CD8-positive, alpha-beta T cell (primary cell): ENCODE measurements at regions of chr12 and their contacts with region 1.

Region 1: GRCh38 chr12:40312982-40313576 is 88.3 kb downstream of the LRRK2 start:
- DNase-seq: no peak
- ATAC-seq: no peak
- H3K4me3 ChIP-seq: no peak overlapping the region
- H3K4me3 Mint-ChIP-seq: no peak overlapping the region
- H3K27ac ChIP-seq: no peak overlapping the region
- H3K27ac Mint-ChIP-seq: no peak overlapping the region
- H3K4me1 ChIP-seq: no peaks in the 10 kb centered on the region
- H3K4me1 Mint-ChIP-seq: no peaks in the 10 kb centered on the region
- H3K27me3 ChIP-seq: no peaks in the 10 kb centered on the region
- H3K27me3 Mint-ChIP-seq: no peaks in the 10 kb centered on the region
- CTCF ChIP-seq: no peak

Region 2: GRCh38 chr12:40342010-40342409 is 28.9 kb after region 1 on chr12:
- CTCF ChIA-PET with region 1: no interaction called
- POLR2A ChIA-PET with region 1: no interaction called
- intact Hi-C with region 1: loop called in 1 of 2 experiments (anchors 2 kb)
- DNase-seq: no peak
- ATAC-seq: no peak
- H3K4me3 ChIP-seq: no peak overlapping the region
- H3K4me3 Mint-ChIP-seq: no peak overlapping the region
- H3K27ac ChIP-seq: no peak overlapping the region
- H3K27ac Mint-ChIP-seq: no peak overlapping the region
- H3K4me1 ChIP-seq: no peaks in the 10 kb centered on the region
- H3K4me1 Mint-ChIP-seq: no peaks in the 10 kb centered on the region
- H3K27me3 ChIP-seq: no peaks in the 10 kb centered on the region
- H3K27me3 Mint-ChIP-seq: no peaks in the 10 kb centered on the region
- CTCF ChIP-seq: no peak

Region 3: GRCh38 chr12:40439771-40440492 is 126.9 kb after region 1 on chr12:
- CTCF ChIA-PET with region 1: no interaction called
- POLR2A ChIA-PET with region 1: no interaction called
- intact Hi-C with region 1: no loop called
- DNase-seq: no peak
- ATAC-seq: no peak
- H3K4me3 ChIP-seq: no peak overlapping the region
- H3K4me3 Mint-ChIP-seq: no peak overlapping the region
- H3K27ac ChIP-seq: no peak overlapping the region
- H3K27ac Mint-ChIP-seq: no peak overlapping the region
- H3K4me1 ChIP-seq: no peaks in the 10 kb centered on the region
- H3K4me1 Mint-ChIP-seq: no peaks in the 10 kb centered on the region
- H3K27me3 ChIP-seq: no peaks in the 10 kb centered on the region
- H3K27me3 Mint-ChIP-seq: no peaks in the 10 kb centered on the region
- CTCF ChIP-seq: no peak

Region 4: GRCh38 chr12:40898505-40898904 is 585.4 kb after region 1 on chr12:
- CTCF ChIA-PET with region 1: no interaction called
- POLR2A ChIA-PET with region 1: no interaction called
- intact Hi-C with region 1: no loop called
- DNase-seq: no peak
- ATAC-seq: no peak
- H3K4me3 ChIP-seq: no peak overlapping the region
- H3K4me3 Mint-ChIP-seq: no peak overlapping the region
- H3K27ac ChIP-seq: no peak overlapping the region
- H3K27ac Mint-ChIP-seq: no peak overlapping the region
- H3K4me1 ChIP-seq: no peaks in the 10 kb centered on the region
- H3K4me1 Mint-ChIP-seq: no peaks in the 10 kb centered on the region
- H3K27me3 ChIP-seq: no peaks in the 10 kb centered on the region
- H3K27me3 Mint-ChIP-seq: no peaks in the 10 kb centered on the region
- CTCF ChIP-seq: no peak